ENCODE measurements at regions of chr19 and their contacts with region 1.

Region 1: DNA sequence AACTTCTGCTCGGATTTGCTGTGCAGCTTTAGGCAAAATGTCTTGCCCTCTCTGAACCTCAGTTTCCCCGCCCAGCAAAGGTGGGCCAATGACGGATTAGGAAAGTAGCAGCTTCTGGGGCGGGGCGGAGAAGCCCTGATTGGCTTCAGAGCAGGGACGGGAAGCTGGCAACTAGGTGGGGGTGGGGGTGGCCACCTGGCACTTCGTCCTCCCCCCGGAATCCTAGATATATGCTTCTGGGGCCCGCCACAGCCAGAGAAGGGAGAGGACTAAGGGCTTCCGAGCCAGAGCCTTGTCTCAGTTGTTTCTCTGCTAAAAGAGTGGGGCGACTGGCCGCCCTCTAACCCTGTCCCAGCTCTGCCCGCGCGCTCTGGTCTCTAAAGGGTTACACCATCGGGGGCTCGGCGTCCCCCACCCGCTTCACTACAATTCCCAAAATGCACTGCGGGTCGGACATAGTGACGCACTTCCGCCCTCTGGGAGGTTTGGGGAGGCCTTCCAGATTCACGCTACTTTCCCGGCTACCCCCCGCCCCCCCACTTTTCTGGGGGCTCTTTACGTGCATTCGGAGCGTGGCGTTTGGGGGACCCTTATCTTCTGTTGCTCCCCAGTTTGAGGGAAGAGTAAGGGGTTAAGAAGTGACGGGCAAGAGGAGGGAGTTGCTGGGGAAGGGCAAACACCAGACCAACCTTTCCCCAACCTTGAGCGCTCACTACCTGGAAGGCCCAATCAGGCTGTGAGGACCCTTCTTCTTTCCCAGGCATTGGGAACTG is 672 bp upstream of the IRF2BP1 start:
- DNase-seq: peak; percentile 96
- ATAC-seq: peak; percentile 85
- H3K4me3 Mint-ChIP-seq: peak overlapping the region; percentile 85
- H3K27ac Mint-ChIP-seq: peak overlapping the region; percentile 95
- H3K4me1 Mint-ChIP-seq: peaks cover 17% of the 10 kb centered on the region
- H3K27me3 Mint-ChIP-seq: no peaks in the 10 kb centered on the region

Region 2: DNA sequence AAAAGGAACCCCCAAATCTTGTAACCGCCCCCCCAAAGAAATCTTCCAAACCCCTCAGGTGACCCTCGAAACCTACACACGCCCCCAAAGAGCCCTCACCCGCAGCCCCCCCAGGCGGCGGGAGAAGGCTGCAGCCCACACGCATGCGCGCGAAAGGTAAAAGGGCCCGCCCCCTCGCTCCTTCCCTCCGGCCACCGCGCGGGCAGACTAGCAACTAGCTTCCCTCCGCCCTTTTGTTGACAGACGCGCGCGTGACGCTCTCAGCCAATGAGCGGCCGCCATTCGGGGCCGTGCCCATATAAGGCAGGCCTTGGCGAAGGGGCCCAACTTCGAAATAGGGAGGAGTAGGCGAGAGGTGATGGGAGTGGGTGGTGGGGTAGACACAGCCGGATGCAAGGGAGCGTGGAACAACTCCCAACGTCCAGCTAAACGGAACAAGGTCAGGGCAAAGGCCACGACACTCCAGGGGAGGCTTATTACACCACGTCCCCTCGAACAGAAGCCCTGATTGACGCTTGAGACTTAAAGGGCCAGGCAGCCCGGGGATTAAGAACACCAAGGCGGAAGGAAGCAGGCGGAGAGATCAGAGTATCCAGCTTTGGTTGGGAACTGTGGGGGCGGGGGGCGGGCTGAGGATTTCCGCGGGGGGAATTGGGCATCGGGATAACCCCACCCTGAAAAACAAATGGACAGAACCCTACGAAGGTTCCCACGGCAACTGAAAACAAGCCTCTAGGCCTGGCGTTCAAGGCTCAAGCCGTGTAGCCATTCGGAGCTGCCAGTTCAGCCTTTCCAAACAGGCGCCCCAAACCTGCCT is 169.2 kb before region 1 on chr19:
- CTCF ChIA-PET with region 1: no interaction called
- POLR2A ChIA-PET with region 1: interaction called, 3 read pairs
- intact Hi-C with region 1: loop called in 1 of 2 experiments (anchors 1 kb)
- DNase-seq: peak; percentile 99
- ATAC-seq: peak; percentile 97
- H3K4me3 Mint-ChIP-seq: peak overlapping the region; percentile 93
- H3K27ac Mint-ChIP-seq: peak overlapping the region; percentile 94
- H3K4me1 Mint-ChIP-seq: peaks cover 40% of the 10 kb centered on the region
- H3K27me3 Mint-ChIP-seq: no peaks in the 10 kb centered on the region

Region 3: DNA sequence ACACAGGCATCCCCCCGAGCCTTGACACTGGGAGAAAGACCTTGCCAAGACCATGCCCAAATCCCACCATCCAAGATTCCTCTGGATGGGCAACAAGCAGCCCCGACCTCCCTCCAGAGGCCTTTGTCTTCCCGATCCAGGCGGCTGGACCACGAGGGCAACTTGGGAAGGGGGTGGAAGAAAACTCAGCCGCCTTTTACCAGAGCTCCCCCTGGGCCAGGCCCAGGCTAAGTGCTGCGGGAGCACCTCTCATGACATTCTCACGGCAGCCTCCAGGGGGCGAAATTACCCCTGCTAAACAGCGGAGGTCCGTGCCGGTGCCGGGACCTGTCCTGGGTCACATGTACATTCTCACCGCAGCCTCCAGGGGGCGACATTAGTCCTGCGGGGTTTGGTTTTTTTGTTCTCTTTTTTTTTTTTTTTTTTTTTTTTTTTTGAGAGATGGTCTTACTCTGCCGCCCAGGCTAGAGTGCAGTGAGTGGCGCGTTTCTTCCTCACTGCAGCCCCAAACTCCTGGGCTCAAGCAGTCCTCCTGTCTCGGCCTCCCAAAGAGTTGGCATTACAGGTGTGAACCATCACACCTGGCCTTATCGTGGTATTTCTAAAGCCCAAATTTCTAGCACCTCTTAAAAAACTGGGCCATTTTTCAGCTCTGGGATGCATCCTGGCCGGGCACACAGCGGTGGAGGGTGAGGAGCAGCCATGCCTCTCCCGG is 69.4 kb before region 1 on chr19:
- CTCF ChIA-PET with region 1: interaction called, 13 read pairs
- POLR2A ChIA-PET with region 1: no interaction called
- intact Hi-C with region 1: loop called (anchors 1 kb)
- DNase-seq: peak; percentile 99
- ATAC-seq: peak; percentile 100
- H3K4me3 Mint-ChIP-seq: no peak overlapping the region
- H3K27ac Mint-ChIP-seq: no peak overlapping the region
- H3K4me1 Mint-ChIP-seq: peaks cover 7% of the 10 kb centered on the region
- H3K27me3 Mint-ChIP-seq: peaks cover 10% of the 10 kb centered on the region

Region 4: GRCh38 chr19:45919678-45920077 is 33.1 kb after region 1 on chr19:
- CTCF ChIA-PET with region 1: interaction called, 3 read pairs
- POLR2A ChIA-PET with region 1: no interaction called
- intact Hi-C with region 1: loop called in 1 of 2 experiments (anchors 2 kb)
- DNase-seq: peak; percentile 16
- ATAC-seq: no peak
- H3K4me3 Mint-ChIP-seq: no peak overlapping the region
- H3K27ac Mint-ChIP-seq: no peak overlapping the region
- H3K4me1 Mint-ChIP-seq: peaks cover 2% of the 10 kb centered on the region
- H3K27me3 Mint-ChIP-seq: peaks cover 6% of the 10 kb centered on the region

Region 5: GRCh38 chr19:46090444-46090843 is 203.8 kb after region 1 on chr19:
- CTCF ChIA-PET with region 1: no interaction called
- POLR2A ChIA-PET with region 1: no interaction called
- intact Hi-C with region 1: no loop called
- DNase-seq: no peak
- ATAC-seq: no peak
- H3K4me3 Mint-ChIP-seq: no peak overlapping the region
- H3K27ac Mint-ChIP-seq: no peak overlapping the region
- H3K4me1 Mint-ChIP-seq: no peaks in the 10 kb centered on the region
- H3K27me3 Mint-ChIP-seq: peaks cover 41% of the 10 kb centered on the region

Region 6: DNA sequence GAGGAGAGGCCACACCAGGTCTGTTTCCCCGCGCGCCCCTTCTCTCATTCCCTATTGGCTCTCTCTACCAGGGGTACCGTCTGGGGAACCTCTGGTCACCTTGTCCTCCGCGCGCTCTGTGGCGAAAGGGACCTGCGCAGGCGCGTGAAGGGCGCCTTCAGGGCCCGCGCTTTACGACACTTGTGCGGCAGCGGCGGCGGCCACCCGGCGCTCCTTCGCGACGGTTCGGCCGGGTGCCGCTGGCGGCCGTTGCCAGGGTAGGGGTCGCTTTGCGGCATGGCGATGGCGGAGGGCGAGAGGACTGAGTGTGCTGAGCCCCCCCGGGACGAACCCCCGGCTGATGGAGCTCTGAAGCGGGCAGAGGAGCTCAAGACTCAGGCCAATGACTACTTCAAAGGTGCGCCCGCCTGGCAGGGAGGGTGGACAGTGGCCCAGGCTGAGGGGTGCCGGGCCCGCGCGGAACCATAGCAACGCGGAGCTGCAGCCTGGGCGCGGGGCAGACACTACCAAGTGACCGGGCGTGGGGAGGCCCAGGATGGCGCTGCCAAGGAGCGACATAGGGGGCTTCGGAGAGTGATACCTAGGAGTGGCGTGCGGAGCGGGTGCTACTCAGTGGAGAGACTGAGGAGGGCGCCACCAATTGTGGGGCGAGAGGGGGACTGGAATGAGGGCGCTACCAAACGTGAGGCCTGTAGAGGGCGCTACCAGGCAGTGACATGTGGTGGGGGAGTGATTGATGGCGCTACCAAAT is 460.4 kb after region 1 on chr19 and contains the start of gene PPP5C:
- CTCF ChIA-PET with region 1: no interaction called
- POLR2A ChIA-PET with region 1: no interaction called
- intact Hi-C with region 1: loop called in 1 of 2 experiments (anchors 1 kb)
- DNase-seq: peak; percentile 94
- ATAC-seq: peak; percentile 74
- H3K4me3 Mint-ChIP-seq: peak within 1 kb of the TSS; percentile 90
- H3K27ac Mint-ChIP-seq: peak within 1 kb of the TSS; percentile 91
- H3K4me1 Mint-ChIP-seq: peaks cover 41% of the 10 kb centered on the region
- H3K27me3 Mint-ChIP-seq: no peaks in the 10 kb centered on the region
- total RNA-seq, gene PPP5C: 100.0 to 129 TPM